CD4-positive, alpha-beta T cell (primary cell): ENCODE measurements at regions of chr2 and their contacts with region 1.

Region 1: GRCh38 chr2:46650556-46651001 is 171.2 kb downstream of the TMEM247 start:
- DNase-seq: peak; percentile 39 to 88 (median 58)
- ATAC-seq: peak; percentile 80
- H3K4me3 ChIP-seq: no peak overlapping the region
- H3K4me3 Mint-ChIP-seq: no peak overlapping the region
- H3K27ac ChIP-seq: no peak overlapping the region
- H3K27ac Mint-ChIP-seq: no peak overlapping the region
- H3K4me1 ChIP-seq: no peaks in the 10 kb centered on the region
- H3K4me1 Mint-ChIP-seq: no peaks in the 10 kb centered on the region
- H3K27me3 ChIP-seq: no peaks in the 10 kb centered on the region
- H3K27me3 Mint-ChIP-seq: no peaks in the 10 kb centered on the region
- CTCF ChIP-seq: peak; percentile 94

Region 2: DNA sequence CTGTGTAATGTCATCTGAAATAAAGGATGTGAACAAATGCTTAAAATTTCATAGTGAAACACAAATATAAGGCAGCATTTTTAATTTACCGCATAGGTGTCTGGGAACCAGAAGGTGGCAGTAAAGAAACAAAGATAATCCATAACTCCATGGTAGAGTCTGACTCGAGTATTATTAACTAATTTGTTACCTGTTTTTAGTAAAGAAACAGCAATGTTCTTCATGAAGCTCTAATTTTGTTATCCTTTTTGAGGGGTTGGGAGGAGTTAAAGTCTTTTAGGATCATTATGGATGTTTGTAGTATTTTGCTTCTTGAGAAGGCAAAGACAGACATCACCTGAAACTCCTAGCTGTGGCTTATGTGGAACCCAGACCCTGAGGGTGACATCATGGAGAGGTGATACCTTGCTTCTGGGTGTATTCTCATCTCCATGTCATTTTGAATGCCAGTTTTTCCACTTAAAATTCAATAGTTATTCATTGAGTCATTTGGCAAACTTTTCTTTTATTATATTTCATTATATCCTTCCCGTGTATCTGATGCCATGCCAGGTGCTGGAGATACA is 639.6 kb before region 1 on chr2:
- CTCF ChIA-PET with region 1: no interaction called
- POLR2A ChIA-PET with region 1: no interaction called
- intact Hi-C with region 1: loop called (anchors 1 to 5 kb)
- DNase-seq: peak in 3 of 14 experiments; percentile 36 to 45 (median 36)
- ATAC-seq: no peak
- H3K4me3 ChIP-seq: no peak overlapping the region
- H3K4me3 Mint-ChIP-seq: no peak overlapping the region
- H3K27ac ChIP-seq: no peak overlapping the region
- H3K27ac Mint-ChIP-seq: no peak overlapping the region
- H3K4me1 ChIP-seq: no peaks in the 10 kb centered on the region
- H3K4me1 Mint-ChIP-seq: peaks cover 4% of the 10 kb centered on the region
- H3K27me3 ChIP-seq: no peaks in the 10 kb centered on the region
- H3K27me3 Mint-ChIP-seq: no peaks in the 10 kb centered on the region
- CTCF ChIP-seq: peak; percentile 57

Region 3: GRCh38 chr2:46364797-46365457 is 285.7 kb before region 1 on chr2:
- CTCF ChIA-PET with region 1: no interaction called
- POLR2A ChIA-PET with region 1: no interaction called
- intact Hi-C with region 1: loop called in 1 of 2 experiments (anchors 5 kb)
- DNase-seq: peak in 5 of 14 experiments; percentile 14 to 74 (median 64)
- ATAC-seq: peak; percentile 60
- H3K4me3 ChIP-seq: no peak overlapping the region
- H3K4me3 Mint-ChIP-seq: no peak overlapping the region
- H3K27ac ChIP-seq: no peak overlapping the region
- H3K27ac Mint-ChIP-seq: no peak overlapping the region
- H3K4me1 ChIP-seq: peaks cover 12% of the 10 kb centered on the region
- H3K4me1 Mint-ChIP-seq: peaks cover 37% of the 10 kb centered on the region
- H3K27me3 ChIP-seq: no peaks in the 10 kb centered on the region
- H3K27me3 Mint-ChIP-seq: no peaks in the 10 kb centered on the region
- CTCF ChIP-seq: peak; percentile 86

Region 4: DNA sequence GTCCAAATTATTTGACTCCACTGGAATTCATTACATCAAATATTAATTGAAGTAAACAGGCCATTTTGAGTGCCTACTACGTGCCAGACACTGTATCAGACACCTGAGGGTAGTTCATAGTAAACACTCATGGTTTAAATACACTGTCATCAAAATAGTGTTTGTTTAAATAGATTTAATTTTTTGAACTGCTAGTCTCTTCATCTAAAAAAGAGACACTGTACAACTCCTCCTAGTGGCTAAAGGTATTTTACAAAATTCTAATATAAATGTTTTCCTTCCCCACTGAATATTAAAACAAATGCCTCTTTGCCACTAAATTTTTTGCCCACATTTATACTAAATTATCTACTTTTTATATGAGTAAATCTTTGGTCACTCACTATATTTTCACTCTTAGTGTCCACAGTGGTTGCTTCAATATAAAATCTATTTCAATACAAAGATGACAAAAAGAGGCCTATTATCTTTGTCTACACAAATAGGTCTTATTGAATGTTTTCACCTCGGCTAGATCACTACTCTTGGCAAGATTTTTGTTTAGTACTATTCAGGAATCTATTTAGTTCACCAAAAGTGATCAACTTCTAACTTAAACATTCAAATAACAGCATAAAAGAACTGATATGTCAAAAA is 49.1 kb before region 1 on chr2:
- CTCF ChIA-PET with region 1: interaction called, 3 read pairs
- POLR2A ChIA-PET with region 1: no interaction called
- intact Hi-C with region 1: loop called (anchors 1 to 5 kb)
- DNase-seq: peak in 3 of 14 experiments; percentile 20 to 30 (median 25)
- ATAC-seq: no peak
- H3K4me3 ChIP-seq: no peak overlapping the region
- H3K4me3 Mint-ChIP-seq: no peak overlapping the region
- H3K27ac ChIP-seq: no peak overlapping the region
- H3K27ac Mint-ChIP-seq: no peak overlapping the region
- H3K4me1 ChIP-seq: no peaks in the 10 kb centered on the region
- H3K4me1 Mint-ChIP-seq: no peaks in the 10 kb centered on the region
- H3K27me3 ChIP-seq: no peaks in the 10 kb centered on the region
- H3K27me3 Mint-ChIP-seq: no peaks in the 10 kb centered on the region
- CTCF ChIP-seq: peak; percentile 69

Region 5: GRCh38 chr2:46632349-46632748 is 18.2 kb before region 1 on chr2:
- CTCF ChIA-PET with region 1: interaction called, 10 read pairs
- POLR2A ChIA-PET with region 1: no interaction called
- intact Hi-C with region 1: loop called in 1 of 2 experiments (anchors 1 kb)
- DNase-seq: peak in 3 of 14 experiments; percentile 23 to 44 (median 41)
- ATAC-seq: no peak
- H3K4me3 ChIP-seq: no peak overlapping the region
- H3K4me3 Mint-ChIP-seq: no peak overlapping the region
- H3K27ac ChIP-seq: no peak overlapping the region
- H3K27ac Mint-ChIP-seq: no peak overlapping the region
- H3K4me1 ChIP-seq: peaks cover 3% of the 10 kb centered on the region
- H3K4me1 Mint-ChIP-seq: peaks cover 10% of the 10 kb centered on the region
- H3K27me3 ChIP-seq: no peaks in the 10 kb centered on the region
- H3K27me3 Mint-ChIP-seq: no peaks in the 10 kb centered on the region
- CTCF ChIP-seq: peak; percentile 30